PC-9 (cell line): ENCODE measurements at regions of chr13 and their contacts with region 1.

Region 1: GRCh38 chr13:41193919-41194824 is at the start of gene KBTBD7:
- DNase-seq: peak; percentile 82 to 90
- H3K4me3 ChIP-seq: peak within 1 kb of the TSS; percentile 62
- H3K27ac ChIP-seq: peak within 1 kb of the TSS; percentile 21; the same call in 1 of the 2 replicates
- H3K4me1 ChIP-seq: no peaks in the 10 kb centered on the region
- H3K27me3 ChIP-seq: no peaks in the 10 kb centered on the region
- CTCF ChIP-seq: no peak
- total RNA-seq, gene KBTBD7: 3.9 and 4.1 TPM in 2 replicates

Region 2: DNA sequence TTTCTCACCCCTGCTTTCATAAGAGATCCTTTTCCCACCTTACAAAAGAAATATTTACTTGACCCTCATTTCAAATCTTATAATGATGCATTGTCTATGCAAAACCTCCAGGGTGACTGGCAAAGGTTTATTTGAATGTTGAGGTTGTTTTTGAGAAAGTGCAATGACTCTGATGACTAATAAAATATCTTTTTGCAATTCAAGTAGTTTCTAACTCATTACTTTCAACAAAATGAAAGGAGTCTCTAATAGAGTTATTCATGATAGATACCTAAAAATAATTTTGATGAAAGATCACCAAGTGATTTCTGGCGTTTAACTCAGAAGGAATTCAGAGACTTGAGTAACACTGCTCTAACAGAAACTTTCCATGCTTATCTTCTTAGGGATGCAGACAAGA is 671.9 kb before region 1 on chr13:
- CTCF ChIA-PET with region 1: no interaction called
- POLR2A ChIA-PET with region 1: no interaction called
- intact Hi-C with region 1: no loop called
- DNase-seq: no peak
- H3K4me3 ChIP-seq: no peak overlapping the region
- H3K27ac ChIP-seq: no peak overlapping the region
- H3K4me1 ChIP-seq: peaks cover 10% of the 10 kb centered on the region
- H3K27me3 ChIP-seq: no peaks in the 10 kb centered on the region
- CTCF ChIP-seq: no peak

Region 3: DNA sequence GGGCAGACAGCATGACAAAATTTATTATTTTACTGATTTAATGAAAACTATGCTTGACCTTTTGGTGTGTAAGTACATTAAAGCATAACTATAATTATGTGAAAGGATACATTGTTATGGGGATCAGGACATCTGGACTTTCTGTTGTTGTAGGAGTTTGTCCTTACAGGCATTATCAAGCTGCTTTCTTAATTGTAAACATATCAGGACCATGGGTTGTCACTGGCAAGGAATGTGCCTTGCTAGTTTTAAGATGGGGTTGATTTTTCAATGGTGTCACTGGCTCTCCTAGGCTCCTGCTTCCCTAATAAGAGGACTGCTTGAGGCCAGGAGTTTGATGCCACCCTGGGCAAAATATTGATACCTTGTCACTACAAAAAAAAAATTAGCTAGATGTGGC is 94.2 kb before region 1 on chr13:
- CTCF ChIA-PET with region 1: no interaction called
- POLR2A ChIA-PET with region 1: interaction called, 15 read pairs
- intact Hi-C with region 1: no loop called
- DNase-seq: no peak
- H3K4me3 ChIP-seq: no peak overlapping the region
- H3K27ac ChIP-seq: no peak overlapping the region
- H3K4me1 ChIP-seq: no peaks in the 10 kb centered on the region
- H3K27me3 ChIP-seq: no peaks in the 10 kb centered on the region
- CTCF ChIP-seq: no peak

Region 4: DNA sequence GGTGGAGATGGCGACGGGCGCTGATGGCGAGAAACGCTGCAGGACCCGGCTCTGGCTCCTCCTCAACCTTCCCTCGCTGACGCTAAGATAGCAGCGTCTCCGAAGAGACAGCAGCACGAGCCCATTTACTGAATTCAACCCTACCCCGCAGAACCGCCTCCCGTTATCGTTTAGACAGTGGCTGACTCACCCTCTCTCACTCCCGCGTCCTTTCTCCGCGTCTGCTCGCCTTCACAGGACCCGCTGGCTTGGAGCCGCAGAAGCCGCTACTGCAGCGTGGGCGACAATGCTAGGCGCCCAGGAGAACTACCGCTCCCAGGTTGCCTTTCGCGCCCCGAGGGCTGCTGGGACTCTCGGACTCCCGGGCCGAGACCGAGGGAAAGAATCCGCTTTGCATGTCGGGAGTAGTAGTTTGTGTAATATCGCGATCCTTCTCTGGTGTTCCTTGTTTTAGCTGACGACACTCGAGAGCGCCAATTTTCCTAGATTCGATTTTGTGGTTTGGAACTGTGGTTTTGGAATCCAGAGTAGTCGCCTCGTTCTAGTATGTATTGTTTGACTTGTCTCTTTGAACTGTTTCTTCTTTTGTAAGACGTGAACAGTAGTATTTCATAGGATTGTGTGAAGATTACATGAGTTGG is 61.5 kb before region 1 on chr13 and contains the start of gene KBTBD6:
- CTCF ChIA-PET with region 1: no interaction called
- POLR2A ChIA-PET with region 1: no interaction called
- intact Hi-C with region 1: loop called (anchors 1 kb)
- DNase-seq: peak; percentile 91
- H3K4me3 ChIP-seq: peak within 1 kb of the TSS; percentile 59
- H3K27ac ChIP-seq: peak within 1 kb of the TSS; percentile 73
- H3K4me1 ChIP-seq: peaks cover 13% of the 10 kb centered on the region
- H3K27me3 ChIP-seq: no peaks in the 10 kb centered on the region
- CTCF ChIP-seq: no peak
- total RNA-seq, gene KBTBD6: 4.3 TPM in 2 replicates

Region 5: GRCh38 chr13:41263261-41264027 is 69.3 kb after region 1 on chr13 and contains the start of gene MTRF1:
- CTCF ChIA-PET with region 1: no interaction called
- POLR2A ChIA-PET with region 1: no interaction called
- intact Hi-C with region 1: no loop called
- DNase-seq: peak; percentile 54 to 57
- H3K4me3 ChIP-seq: peak within 1 kb of the TSS; percentile 96
- H3K27ac ChIP-seq: peak within 1 kb of the TSS; percentile 36; the same call in 1 of the 2 replicates
- H3K4me1 ChIP-seq: peaks cover 5% of the 10 kb centered on the region
- H3K27me3 ChIP-seq: no peaks in the 10 kb centered on the region
- CTCF ChIP-seq: no peak
- total RNA-seq, gene MTRF1: 8.2 and 15.8 TPM in 2 replicates